PC-3 (cell line): ENCODE measurements at regions of chr12 and their contacts with region 1.

Region 1: DNA sequence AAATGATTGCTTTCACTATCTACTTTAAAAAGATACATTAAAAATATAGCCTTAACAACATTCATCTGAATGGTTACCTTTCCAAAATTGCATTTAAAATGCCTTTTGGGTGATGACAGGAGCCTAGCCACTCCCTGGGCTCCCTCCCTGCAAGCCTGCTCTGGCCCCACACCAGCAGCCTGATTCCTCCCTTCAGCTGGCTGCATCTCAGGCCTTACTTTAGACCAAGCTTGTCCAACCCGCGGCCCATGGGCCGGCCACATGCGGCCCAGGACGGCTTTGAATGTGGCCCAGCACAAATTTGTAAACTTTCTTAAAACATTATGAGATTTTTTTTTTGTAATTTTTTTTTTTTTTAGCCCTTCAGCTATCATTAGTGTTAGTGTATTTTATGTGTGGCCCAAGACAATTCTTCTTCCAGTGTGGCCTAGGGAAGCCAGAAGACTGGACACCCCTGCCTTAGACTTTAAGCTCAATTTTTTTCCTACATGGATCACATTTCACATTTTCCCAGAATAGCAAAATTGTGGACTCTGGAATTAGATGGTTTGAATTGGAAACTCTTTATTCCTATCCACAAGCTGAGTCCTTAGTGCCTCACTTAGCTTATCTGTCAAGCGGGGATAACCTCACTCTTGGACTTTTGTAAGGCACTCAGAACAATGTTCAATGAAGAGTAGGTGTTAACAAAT is 124.4 kb downstream of the MYRFL start:
- DNase-seq: no peak
- ATAC-seq: no peak
- H3K4me3 ChIP-seq: no peak overlapping the region
- H3K27ac ChIP-seq: no peak overlapping the region
- H3K4me1 ChIP-seq: no peaks in the 10 kb centered on the region
- H3K27me3 ChIP-seq: no peaks in the 10 kb centered on the region
- CTCF ChIP-seq: no peak

Region 2: DNA sequence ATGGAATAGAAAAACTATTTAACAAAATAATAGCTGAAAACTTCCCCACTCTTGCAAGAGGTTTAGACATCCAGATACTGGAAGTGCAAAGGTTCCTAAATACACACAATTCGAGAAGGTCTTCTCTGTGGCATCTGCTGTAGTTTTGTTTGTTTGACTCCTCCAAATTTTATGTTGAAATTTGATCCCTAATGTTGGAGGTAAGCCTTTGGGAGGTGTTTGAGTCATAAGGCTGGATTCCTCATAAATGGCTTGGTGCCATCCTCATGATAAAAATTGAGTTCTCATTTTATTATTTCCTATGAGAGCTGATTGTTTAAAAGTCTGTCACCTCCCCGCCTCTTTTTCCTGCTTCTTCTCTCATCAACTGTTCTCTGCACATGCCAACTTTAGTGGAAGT is 58.2 kb after region 1 on chr12:
- CTCF ChIA-PET with region 1: no interaction called
- POLR2A ChIA-PET with region 1: no interaction called
- intact Hi-C with region 1: no loop called
- DNase-seq: peak; percentile 90
- ATAC-seq: peak; percentile 95
- H3K4me3 ChIP-seq: no peak overlapping the region
- H3K27ac ChIP-seq: peak overlapping the region; percentile 16; the same call in 1 of the 2 replicates
- H3K4me1 ChIP-seq: peaks cover 26% of the 10 kb centered on the region
- H3K27me3 ChIP-seq: no peaks in the 10 kb centered on the region
- CTCF ChIP-seq: no peak

Region 3: DNA sequence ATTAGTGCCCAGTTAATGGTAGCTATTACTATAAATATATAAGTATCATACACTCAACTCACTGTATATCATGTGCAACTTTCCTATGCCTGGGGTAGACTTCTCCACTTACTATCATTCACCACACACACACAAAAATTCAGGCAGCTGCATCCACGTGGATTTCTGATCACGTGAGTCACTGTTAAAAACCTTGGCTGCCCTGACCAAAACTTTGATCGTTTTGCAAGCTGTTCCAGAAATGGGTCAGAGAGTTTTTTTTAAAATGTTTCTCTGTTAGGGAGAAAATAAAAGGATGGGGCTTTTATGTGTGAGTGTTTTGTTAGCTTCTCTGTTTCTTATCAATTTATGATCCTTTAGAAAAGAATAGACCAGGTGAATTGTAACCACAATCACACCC is 95.6 kb after region 1 on chr12:
- CTCF ChIA-PET with region 1: no interaction called
- POLR2A ChIA-PET with region 1: interaction called, 18 read pairs
- intact Hi-C with region 1: no loop called
- DNase-seq: no peak
- ATAC-seq: no peak
- H3K4me3 ChIP-seq: no peak overlapping the region
- H3K27ac ChIP-seq: no peak overlapping the region
- H3K4me1 ChIP-seq: peaks cover 32% of the 10 kb centered on the region
- H3K27me3 ChIP-seq: no peaks in the 10 kb centered on the region
- CTCF ChIP-seq: no peak